ENCODE measurements at regions of chr14 and their contacts with region 1.

Region 1: GRCh38 chr14:51219473-51220448 is 20.3 kb upstream of the TMX1 start:
- DNase-seq: peak; percentile 46
- H3K4me3 ChIP-seq: no peak overlapping the region
- CTCF ChIP-seq: peak; percentile 55

Region 2: DNA sequence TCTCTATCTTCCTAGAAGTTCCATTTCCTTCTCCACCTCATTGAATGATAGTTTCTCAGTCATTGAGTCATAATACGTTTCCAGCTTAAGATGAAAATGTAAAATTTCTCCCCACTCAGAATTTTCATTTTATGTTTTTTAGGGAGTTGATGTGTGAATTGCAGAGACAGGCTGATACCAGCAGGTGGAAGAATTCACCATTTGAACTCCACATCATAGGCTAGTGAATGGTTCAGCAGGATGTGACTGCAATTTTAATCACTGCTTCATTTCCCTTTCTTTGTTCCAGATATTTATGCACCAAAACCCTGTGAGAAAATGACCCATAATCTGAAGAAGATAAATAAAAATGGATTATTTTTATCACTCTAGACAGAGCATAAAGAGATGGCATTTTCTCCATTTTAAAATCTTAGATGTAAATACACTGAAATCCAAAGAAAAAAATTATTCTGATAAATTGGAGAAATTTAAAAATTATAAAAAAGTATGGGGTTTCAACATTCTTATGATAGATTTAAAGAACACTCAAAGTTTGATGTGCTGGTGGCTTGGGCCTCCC is 264.9 kb before region 1 on chr14:
- in situ Hi-C with region 1: loop called (anchors 25 kb)
- DNase-seq: peak; percentile 57
- H3K4me3 ChIP-seq: no peak overlapping the region
- CTCF ChIP-seq: peak; percentile 83

Region 3: GRCh38 chr14:51157012-51157411 is 62.7 kb before region 1 on chr14:
- in situ Hi-C with region 1: no loop called
- DNase-seq: no peak
- H3K4me3 ChIP-seq: no peak overlapping the region
- CTCF ChIP-seq: peak; percentile 46